Activated CD8-positive, alpha-beta T cell treated with anti-CD3 and anti-CD28 coated beads for 36 hours (primary cell): ENCODE measurements at regions of chr1 and their contacts with region 1.

Region 1: GRCh38 chr1:47252369-47252768 is 20.3 kb upstream of the TAL1 start:
- DNase-seq: no peak
- ATAC-seq: no peak
- H3K4me3 Mint-ChIP-seq: no peak overlapping the region
- H3K27ac Mint-ChIP-seq: no peak overlapping the region
- H3K4me1 Mint-ChIP-seq: no peaks in the 10 kb centered on the region
- H3K27me3 Mint-ChIP-seq: no peaks in the 10 kb centered on the region
- CTCF ChIP-seq: no peak

Region 2: DNA sequence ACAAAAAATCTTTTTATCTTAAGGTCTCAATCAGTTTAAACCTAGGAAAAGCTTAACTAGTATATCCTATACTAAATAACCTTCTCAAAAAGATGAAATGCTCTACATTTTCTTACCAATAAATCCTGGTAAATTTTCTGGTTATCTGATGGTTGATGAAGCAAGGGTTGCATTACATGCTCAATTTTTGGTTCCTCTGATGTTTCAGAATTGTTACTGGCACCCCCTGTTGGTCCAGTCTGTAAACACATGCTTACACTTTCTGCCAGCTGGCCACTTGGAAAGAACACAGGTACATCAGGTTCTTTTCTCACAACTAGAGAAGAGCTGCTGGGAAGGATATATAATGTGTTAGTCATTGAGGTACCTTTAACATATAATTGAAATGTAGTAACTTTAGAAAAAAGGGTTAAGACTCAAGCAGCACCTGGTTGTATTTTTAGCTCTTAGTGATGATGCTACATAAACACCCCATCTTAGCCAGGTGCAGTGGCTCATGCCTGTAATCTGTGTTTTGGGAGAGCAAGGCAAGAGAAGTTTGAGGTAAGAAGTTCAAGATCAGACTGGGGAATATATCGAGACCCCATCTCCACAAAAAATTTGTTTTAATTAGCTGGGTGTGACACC is 10.5 kb after region 1 on chr1:
- CTCF ChIA-PET with region 1: interaction called, 25 read pairs
- POLR2A ChIA-PET with region 1: interaction called, 3 read pairs
- intact Hi-C with region 1: no loop called
- DNase-seq: peak; percentile 63
- ATAC-seq: peak; percentile 34
- H3K4me3 Mint-ChIP-seq: no peak overlapping the region
- H3K27ac Mint-ChIP-seq: no peak overlapping the region
- H3K4me1 Mint-ChIP-seq: no peaks in the 10 kb centered on the region
- H3K27me3 Mint-ChIP-seq: no peaks in the 10 kb centered on the region
- CTCF ChIP-seq: peak; percentile 66